ENCODE measurements at regions of chr10 and their contacts with region 1.

Region 1: DNA sequence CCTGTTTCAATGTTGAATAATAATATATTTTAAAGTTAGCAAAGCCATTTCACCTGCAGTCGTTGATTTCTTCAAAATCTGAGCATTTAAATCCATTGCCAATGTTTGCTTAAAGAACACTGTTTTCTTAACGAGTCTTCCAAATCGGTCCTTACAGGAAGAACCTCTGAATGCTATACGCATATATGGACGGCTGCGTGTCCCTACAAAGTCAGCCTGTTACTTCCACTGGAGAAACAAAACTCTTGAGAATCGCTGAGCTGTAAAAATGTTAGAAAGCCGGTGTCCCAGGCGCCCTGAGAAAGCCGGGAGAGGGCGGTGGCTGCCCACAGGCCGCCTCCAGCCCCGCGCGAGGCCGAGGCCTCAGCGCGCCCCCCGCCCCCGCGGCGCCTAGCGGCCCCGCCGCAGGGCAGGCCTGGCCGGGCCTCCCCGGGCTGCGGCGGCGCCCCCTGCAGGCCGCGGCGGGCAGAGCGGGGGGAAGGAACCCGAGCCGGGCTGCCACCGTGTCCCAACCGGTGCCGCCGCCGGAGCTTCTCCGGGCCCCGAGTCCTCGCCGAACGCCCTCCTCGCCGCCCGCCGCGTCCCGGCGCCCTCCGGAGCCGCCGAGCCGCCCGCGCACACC is at the start of gene FHIP2A:
- DNase-seq: peak; percentile 81 to 86 (median 83)
- H3K4me3 ChIP-seq: peak within 1 kb of the TSS; percentile 82 to 96 (median 90)
- H3K27ac ChIP-seq: peak within 1 kb of the TSS; percentile 93 to 95
- H3K4me1 ChIP-seq: peaks cover 10 to 37% (median 21%) of the 10 kb centered on the region in 4 experiments
- H3K27me3 ChIP-seq: no peaks in the 10 kb centered on the region

Region 2: DNA sequence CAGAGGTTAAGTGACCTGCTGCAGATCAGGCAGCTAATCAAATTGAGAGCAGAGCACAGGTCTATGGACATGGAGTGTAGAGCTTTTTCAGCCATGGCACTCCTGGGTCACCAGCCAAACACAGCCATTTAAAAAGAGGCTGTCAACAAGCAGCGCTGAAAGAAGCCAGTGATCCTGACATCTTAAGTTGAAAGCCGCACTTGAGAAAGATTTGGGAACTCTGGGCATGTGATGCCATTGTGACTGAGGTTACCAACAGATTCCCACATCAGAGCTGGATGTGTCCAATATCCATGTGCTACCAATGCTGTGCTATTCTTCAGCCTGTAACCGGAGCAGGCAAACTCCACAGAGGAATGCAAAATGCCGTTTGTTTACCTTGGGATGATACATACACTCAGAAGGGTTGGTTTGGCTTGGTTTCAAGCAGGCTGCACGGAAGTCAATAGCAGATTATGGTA is 107.1 kb before region 1 on chr10:
- CTCF ChIA-PET with region 1: no interaction called
- POLR2A ChIA-PET with region 1: no interaction called
- DNase-seq: peak in 2 of 3 donors; percentile 36 to 52
- H3K4me3 ChIP-seq: no peak overlapping the region
- H3K27ac ChIP-seq: no peak overlapping the region
- H3K4me1 ChIP-seq: peaks cover 0 to 40% (median 17%) of the 10 kb centered on the region in 4 experiments
- H3K27me3 ChIP-seq: no peaks in the 10 kb centered on the region

Region 3: DNA sequence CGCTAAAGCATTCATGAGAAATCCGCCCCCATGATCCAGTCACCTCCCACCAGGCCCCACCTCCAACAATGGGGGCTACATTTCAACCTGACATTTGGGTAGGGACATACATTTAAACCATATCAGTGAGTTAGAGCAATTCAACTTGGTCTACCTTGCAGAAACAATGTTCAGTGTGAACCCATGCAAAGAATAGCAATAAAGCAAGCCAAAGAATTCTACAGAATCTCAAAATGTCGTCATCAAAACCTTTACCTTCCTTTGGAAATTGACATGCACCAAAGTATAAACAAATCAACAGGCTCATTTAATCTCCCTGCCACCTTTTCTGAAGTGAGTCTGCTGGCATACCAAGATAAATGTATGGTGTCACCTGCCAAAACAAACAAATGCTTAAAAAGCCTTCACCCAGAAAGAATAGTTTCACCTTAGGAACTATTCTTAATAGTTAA is 94.6 kb before region 1 on chr10:
- CTCF ChIA-PET with region 1: no interaction called
- POLR2A ChIA-PET with region 1: no interaction called
- DNase-seq: no peak
- H3K4me3 ChIP-seq: no peak overlapping the region
- H3K27ac ChIP-seq: no peak overlapping the region
- H3K4me1 ChIP-seq: peaks cover 0 to 21% (median 8%) of the 10 kb centered on the region in 4 experiments
- H3K27me3 ChIP-seq: no peaks in the 10 kb centered on the region

Region 4: DNA sequence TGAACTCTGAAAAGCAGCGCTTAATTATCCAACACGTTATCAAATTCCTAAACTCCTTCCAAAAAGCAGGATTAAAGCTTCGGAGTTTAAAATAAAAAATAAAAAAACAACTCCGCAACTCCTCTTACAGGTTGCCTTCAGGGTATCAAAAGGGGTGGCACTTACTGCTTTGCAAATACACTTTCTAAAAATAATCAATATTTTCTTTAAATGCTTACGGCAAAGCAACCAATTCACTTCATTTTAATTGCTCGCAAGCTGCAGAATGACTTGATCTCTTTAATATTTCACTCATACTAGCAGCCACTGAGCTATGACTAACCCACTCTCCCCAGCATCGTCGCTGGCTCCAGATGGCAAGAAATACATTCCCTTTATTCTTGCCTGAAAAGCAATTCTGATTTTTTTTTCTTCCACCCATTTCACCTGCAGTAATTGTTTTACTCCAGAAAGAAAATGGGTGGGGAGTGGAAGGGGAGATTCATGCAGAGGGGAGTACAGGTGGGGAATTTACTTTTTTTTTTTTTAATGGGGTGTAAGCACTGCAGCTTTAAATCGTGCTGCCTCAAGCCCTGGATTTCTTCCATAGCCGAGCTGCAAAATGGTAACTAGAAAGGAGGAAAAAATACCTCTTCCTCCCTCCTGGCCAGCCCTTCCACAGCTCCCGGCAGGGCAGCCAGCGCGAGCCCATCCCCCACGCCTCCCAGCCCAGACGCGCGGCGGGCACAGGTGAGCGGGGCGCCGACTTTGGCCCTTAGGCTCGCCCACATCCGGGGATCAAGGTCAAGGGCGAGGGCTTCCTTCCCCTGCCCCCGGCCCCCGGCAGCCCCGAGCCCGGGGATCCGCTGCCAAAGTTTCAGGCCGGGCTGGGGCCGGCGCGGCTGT is 54.1 kb before region 1 on chr10:
- CTCF ChIA-PET with region 1: no interaction called
- POLR2A ChIA-PET with region 1: no interaction called
- DNase-seq: peak in 2 of 3 donors; percentile 63 to 74
- H3K4me3 ChIP-seq: peak overlapping the region; percentile 61 to 88 (median 75)
- H3K27ac ChIP-seq: no peak overlapping the region
- H3K4me1 ChIP-seq: peaks cover 8 to 15% (median 10%) of the 10 kb centered on the region in 4 experiments
- H3K27me3 ChIP-seq: no peaks in the 10 kb centered on the region

Region 5: DNA sequence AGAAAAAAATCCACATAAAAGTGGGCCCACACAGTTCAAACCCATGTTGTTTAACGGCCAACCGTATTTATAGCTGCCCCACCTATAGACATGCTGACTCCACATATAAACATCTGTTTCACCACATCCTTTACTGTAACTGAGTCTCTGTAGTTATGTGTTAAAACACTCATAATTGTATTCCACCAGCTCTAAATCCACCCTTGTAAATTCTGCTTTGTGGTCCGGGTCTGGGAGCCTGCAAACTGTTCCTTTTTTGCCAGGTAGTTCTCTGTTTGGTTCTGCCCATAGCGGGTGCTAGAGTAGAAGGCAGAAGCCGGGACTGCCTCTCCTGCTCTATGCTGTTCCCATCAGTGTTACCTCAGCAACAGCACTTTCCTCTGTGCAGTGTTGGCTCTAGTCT is 20.0 kb before region 1 on chr10:
- CTCF ChIA-PET with region 1: interaction called, 6 read pairs
- POLR2A ChIA-PET with region 1: interaction called, 10 read pairs
- DNase-seq: peak; percentile 75 to 97 (median 93)
- H3K4me3 ChIP-seq: peak overlapping the region in 5 of 7 experiments; percentile 7 to 63 (median 44)
- H3K27ac ChIP-seq: peak overlapping the region; percentile 68 to 70
- H3K4me1 ChIP-seq: peaks cover 5 to 38% (median 25%) of the 10 kb centered on the region in 4 experiments
- H3K27me3 ChIP-seq: no peaks in the 10 kb centered on the region

Region 6: DNA sequence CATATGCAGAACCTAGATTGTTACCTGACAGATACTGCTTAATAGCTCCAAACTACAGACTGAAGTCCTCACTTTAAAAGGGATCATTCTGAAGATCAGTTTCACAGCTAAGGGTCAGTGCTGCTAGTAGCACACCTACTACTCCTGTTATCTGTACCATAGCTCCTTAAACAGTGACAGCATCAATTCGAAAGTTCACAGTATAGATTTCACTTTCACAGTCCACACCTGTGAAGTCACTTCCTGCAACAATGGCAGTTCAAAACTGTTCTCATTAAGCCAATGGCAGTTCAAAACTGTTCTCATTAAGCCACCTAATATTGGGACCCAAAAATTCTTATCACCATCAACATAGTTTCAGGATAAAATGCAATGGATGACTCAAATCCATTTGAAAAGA is 10.5 kb before region 1 on chr10:
- CTCF ChIA-PET with region 1: interaction called, 26 read pairs
- POLR2A ChIA-PET with region 1: interaction called, 3 read pairs
- DNase-seq: no peak
- H3K4me3 ChIP-seq: no peak overlapping the region
- H3K27ac ChIP-seq: no peak overlapping the region
- H3K4me1 ChIP-seq: peaks cover 0 to 4% (median 1%) of the 10 kb centered on the region in 4 experiments
- H3K27me3 ChIP-seq: no peaks in the 10 kb centered on the region

Region 7: GRCh38 chr10:114925587-114926586 is 104.5 kb after region 1 on chr10:
- CTCF ChIA-PET with region 1: no interaction called
- POLR2A ChIA-PET with region 1: no interaction called
- DNase-seq: peak; percentile 8 to 64 (median 43)
- H3K4me3 ChIP-seq: no peak overlapping the region
- H3K27ac ChIP-seq: no peak overlapping the region
- H3K4me1 ChIP-seq: no peaks in the 10 kb centered on the region
- H3K27me3 ChIP-seq: peaks cover 0 to 3% (median 0%) of the 10 kb centered on the region in 5 experiments

Measured in common myeloid progenitor, CD34-positive (primary cell).